ENCODE measurements at regions of chr6 and their contacts with region 1.

Region 1: DNA sequence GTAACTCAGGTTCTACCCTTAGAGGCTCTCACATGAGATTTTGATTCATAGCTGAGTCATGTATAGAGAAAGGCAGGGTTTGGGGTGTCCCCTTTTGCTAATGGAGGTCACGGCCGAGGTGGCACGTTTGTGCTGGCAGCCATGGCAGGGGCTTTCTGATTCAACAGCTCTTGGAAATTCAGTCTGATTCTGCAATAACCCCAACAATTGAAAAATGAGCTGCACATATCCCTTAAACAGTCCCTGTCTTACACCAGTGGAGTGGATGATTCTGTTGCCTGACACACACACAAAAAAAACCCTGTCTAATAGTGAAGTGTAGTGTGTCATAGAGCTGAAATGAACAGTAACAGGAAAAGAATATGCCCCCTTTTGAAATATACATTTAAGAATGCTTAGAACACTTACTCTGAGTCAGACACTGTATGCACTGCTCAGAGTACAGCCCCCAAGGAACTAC is 40.4 kb upstream of the ARG1 start:
- DNase-seq: no peak
- ATAC-seq: no peak
- H3K4me3 ChIP-seq: no peak overlapping the region
- H3K27ac ChIP-seq: no peak overlapping the region
- H3K4me1 ChIP-seq: no peaks in the 10 kb centered on the region
- H3K27me3 ChIP-seq: no peaks in the 10 kb centered on the region
- CTCF ChIP-seq: no peak
- POLR2A ChIP-seq: no peak
- RAD21 ChIP-seq: no peak

Region 2: GRCh38 chr6:131116749-131117360 is 415.8 kb before region 1 on chr6:
- CTCF ChIA-PET with region 1: interaction called, 10 read pairs
- POLR2A ChIA-PET with region 1: no interaction called
- RAD21 ChIA-PET with region 1: interaction called in 1 of 2 experiments, 3 read pairs
- intact Hi-C with region 1: loop called (anchors 2 kb)
- DNase-seq: peak; percentile 41
- ATAC-seq: peak; percentile 70; the same call in 1 of the 2 replicates
- H3K4me3 ChIP-seq: no peak overlapping the region
- H3K27ac ChIP-seq: no peak overlapping the region
- H3K4me1 ChIP-seq: no peaks in the 10 kb centered on the region
- H3K27me3 ChIP-seq: no peaks in the 10 kb centered on the region
- CTCF ChIP-seq: peak; percentile 41 to 78 (median 67); a peak in 5 of 6 replicates
- POLR2A ChIP-seq: no peak
- RAD21 ChIP-seq: peak; percentile 87

Region 3: GRCh38 chr6:131199568-131200272 is 332.9 kb before region 1 on chr6:
- CTCF ChIA-PET with region 1: interaction called, 4 read pairs
- POLR2A ChIA-PET with region 1: no interaction called
- RAD21 ChIA-PET with region 1: interaction called in 1 of 2 experiments, 6 read pairs
- intact Hi-C with region 1: loop called (anchors 1 kb)
- DNase-seq: peak; percentile 12
- ATAC-seq: peak; percentile 75
- H3K4me3 ChIP-seq: no peak overlapping the region
- H3K27ac ChIP-seq: no peak overlapping the region
- H3K4me1 ChIP-seq: no peaks in the 10 kb centered on the region
- H3K27me3 ChIP-seq: no peaks in the 10 kb centered on the region
- CTCF ChIP-seq: peak; percentile 31 to 50 (median 42); a peak in 3 of 6 replicates
- POLR2A ChIP-seq: no peak
- RAD21 ChIP-seq: peak; percentile 52

Region 4: DNA sequence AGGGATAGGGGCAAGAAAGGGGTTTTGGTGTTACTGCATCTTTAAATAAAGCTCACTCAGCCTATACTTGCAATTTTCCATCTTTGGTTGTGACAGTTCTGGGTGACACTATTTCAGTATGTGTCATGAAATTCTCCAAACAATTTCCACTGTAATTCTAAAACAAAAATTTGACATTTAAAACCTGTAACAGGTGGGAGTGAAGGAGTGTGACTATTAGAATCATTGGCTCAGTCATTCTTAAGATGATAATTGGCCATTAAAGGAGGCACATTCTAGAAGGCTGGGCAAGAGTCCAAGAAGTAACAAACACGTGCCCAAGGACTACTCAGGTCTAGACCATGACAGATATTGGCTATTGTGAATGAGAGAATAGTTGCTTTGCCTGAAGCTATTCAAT is 112.9 kb before region 1 on chr6:
- CTCF ChIA-PET with region 1: no interaction called
- POLR2A ChIA-PET with region 1: no interaction called
- RAD21 ChIA-PET with region 1: no interaction called
- intact Hi-C with region 1: no loop called
- DNase-seq: no peak
- ATAC-seq: no peak
- H3K4me3 ChIP-seq: no peak overlapping the region
- H3K27ac ChIP-seq: no peak overlapping the region
- H3K4me1 ChIP-seq: no peaks in the 10 kb centered on the region
- H3K27me3 ChIP-seq: no peaks in the 10 kb centered on the region
- CTCF ChIP-seq: no peak
- POLR2A ChIP-seq: no peak
- RAD21 ChIP-seq: no peak